PC-9 (cell line): ENCODE measurements at regions of chr2 and their contacts with region 1.

Region 1: DNA sequence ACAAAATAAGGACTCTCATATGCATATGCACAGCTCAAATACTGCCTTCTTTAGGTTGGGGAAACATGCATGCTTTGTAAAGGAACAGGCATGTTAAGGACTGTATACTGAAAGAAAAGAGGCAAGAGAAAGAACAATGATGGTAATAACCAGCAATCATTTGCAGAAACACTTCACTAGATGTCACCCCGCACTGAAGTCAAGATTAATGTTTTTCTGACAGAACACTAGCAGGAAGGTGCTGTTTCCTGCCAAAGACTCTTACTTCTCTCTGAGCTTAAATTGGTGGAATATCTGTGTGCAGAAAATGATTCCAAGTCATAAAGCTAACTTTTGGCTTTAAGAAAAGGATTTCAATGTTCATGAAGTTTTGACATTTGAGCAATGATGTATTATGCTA is 19.3 kb upstream of the CSRNP3 start:
- DNase-seq: no peak
- H3K4me3 ChIP-seq: no peak overlapping the region
- H3K27ac ChIP-seq: no peak overlapping the region
- H3K4me1 ChIP-seq: no peaks in the 10 kb centered on the region
- H3K27me3 ChIP-seq: no peaks in the 10 kb centered on the region
- CTCF ChIP-seq: no peak

Region 2: DNA sequence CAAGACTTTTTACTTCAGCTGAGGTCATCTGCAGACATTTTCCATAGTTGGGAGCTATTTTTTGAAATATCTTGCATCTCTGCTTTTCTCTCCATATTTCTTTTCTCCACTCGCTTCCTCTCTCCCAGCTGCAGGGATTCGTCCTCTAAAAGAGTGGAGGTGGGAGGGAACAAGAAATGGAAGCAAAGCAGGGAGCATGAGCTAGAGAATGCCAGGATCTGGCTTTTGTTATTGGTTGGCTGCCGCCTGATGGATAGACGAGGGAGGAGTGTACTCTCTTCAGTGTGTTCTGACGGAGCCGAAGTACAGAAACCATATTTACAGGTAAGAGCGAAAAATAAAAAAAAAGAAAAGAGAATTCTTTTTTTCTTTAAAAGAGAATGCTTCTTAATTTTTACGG is 19.3 kb after region 1 on chr2 and contains the start of gene CSRNP3:
- CTCF ChIA-PET with region 1: no interaction called
- POLR2A ChIA-PET with region 1: interaction called, 10 read pairs
- intact Hi-C with region 1: no loop called
- DNase-seq: peak in 1 of 2 experiments; percentile 36
- H3K4me3 ChIP-seq: no peak within 1 kb of the TSS
- H3K27ac ChIP-seq: no peak within 1 kb of the TSS
- H3K4me1 ChIP-seq: no peaks in the 10 kb centered on the region
- H3K27me3 ChIP-seq: no peaks in the 10 kb centered on the region
- CTCF ChIP-seq: no peak
- total RNA-seq, gene CSRNP3: 0.41 and 0.85 TPM in 2 replicates

Region 3: GRCh38 chr2:165594935-165595255 is 144.7 kb after region 1 on chr2:
- CTCF ChIA-PET with region 1: no interaction called
- POLR2A ChIA-PET with region 1: no interaction called
- intact Hi-C with region 1: no loop called
- DNase-seq: no peak
- H3K4me3 ChIP-seq: no peak overlapping the region
- H3K27ac ChIP-seq: no peak overlapping the region
- H3K4me1 ChIP-seq: no peaks in the 10 kb centered on the region
- H3K27me3 ChIP-seq: no peaks in the 10 kb centered on the region
- CTCF ChIP-seq: no peak